HEK293 (cell line): ENCODE measurements at regions of chr3 and their contacts with region 1.

Region 1: GRCh38 chr3:55815262-55815661 is 328.2 kb upstream of the WNT5A start:
- H3K4me3 ChIP-seq: no peak overlapping the region
- H3K27ac ChIP-seq: no peak overlapping the region
- H3K4me1 ChIP-seq: no peaks in the 10 kb centered on the region
- CTCF ChIP-seq: no peak

Region 2: GRCh38 chr3:55779543-55779942 is 35.7 kb before region 1 on chr3:
- CTCF ChIA-PET with region 1: no interaction called
- POLR2A ChIA-PET with region 1: interaction called, 10 read pairs
- H3K4me3 ChIP-seq: no peak overlapping the region
- H3K27ac ChIP-seq: no peak overlapping the region
- H3K4me1 ChIP-seq: peaks cover 3% of the 10 kb centered on the region; the same call in 1 of the 2 replicates
- CTCF ChIP-seq: no peak